ENCODE measurements at regions of chr6 and their contacts with region 1.

Region 1: DNA sequence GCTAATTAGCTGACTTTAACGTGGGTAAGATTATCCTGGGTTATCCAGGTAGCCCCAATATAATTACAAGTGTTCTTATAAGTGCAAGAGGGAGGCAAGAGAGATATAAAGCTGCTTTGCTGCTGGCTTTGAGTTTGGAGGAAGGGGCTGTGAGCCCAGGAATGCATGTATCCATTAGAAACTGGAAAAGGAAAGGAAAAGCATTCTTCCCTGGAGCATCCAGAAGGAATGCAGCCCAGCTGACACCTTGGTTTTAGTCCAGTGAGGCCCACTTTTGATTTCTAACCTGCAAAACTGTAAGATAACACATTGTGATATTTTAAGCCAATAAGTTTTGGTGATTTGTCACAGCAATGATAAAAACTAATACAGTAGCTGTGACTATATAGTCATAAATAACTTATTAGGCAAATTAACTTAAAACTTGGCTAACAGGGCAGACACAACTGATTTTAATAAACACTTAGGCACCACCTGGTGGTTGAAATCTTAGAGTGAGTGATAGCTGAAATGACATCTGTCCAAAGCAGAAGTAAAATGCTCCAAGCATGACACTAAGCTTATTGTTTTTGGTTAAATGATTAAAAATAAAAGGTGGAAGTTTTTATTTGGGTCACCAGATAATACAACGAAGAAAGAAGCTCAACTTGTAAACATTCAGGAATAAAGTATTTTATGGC is 35.6 kb downstream of the ADGRF4 start:
- DNase-seq: peak; percentile 67
- ATAC-seq: no peak
- H3K4me3 ChIP-seq: no peak overlapping the region
- H3K27ac ChIP-seq: no peak overlapping the region
- H3K4me1 ChIP-seq: peaks cover 61% of the 10 kb centered on the region
- H3K27me3 ChIP-seq: no peaks in the 10 kb centered on the region
- CTCF ChIP-seq: peak; percentile 79

Region 2: DNA sequence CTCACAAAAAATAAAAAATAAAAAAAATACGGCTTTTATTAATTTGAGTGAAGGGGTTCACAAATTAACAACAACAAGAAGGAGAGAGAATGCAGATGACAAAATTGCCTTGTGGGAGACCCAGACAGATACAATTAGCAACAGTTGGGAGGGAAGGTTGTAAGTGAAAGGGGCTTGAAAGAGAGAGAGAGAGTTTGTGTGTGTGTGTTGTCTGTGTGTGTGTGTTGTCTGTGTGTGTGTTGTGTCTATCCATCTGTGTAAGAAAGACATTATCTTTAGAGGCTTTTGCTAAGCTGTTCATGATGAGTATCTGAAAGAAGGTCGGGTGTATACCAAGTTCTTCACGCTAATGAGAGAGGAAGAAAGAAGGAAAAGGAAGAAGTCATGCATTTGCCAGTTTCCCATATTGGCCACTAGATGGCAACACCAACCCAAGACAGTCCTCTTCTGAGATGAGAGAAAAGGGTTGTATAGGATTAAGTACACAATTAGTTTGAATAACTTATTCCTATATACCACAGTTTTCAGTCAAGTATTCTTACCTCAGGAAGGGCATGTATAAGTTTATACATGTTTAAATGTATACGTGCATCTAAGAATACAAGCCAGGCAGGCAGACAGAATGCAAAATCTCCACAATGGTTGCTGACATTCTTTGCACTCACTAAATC is 320.1 kb before region 1 on chr6:
- CTCF ChIA-PET with region 1: interaction called, 3 read pairs
- POLR2A ChIA-PET with region 1: interaction called, 5 read pairs
- intact Hi-C with region 1: loop called (anchors 2 kb)
- DNase-seq: peak; percentile 77
- ATAC-seq: peak; percentile 90
- H3K4me3 ChIP-seq: peak overlapping the region; percentile 64
- H3K27ac ChIP-seq: peak overlapping the region; percentile 41
- H3K4me1 ChIP-seq: peaks cover 12% of the 10 kb centered on the region; the same call in 1 of the 2 replicates
- H3K27me3 ChIP-seq: no peaks in the 10 kb centered on the region
- CTCF ChIP-seq: peak; percentile 96

Region 3: DNA sequence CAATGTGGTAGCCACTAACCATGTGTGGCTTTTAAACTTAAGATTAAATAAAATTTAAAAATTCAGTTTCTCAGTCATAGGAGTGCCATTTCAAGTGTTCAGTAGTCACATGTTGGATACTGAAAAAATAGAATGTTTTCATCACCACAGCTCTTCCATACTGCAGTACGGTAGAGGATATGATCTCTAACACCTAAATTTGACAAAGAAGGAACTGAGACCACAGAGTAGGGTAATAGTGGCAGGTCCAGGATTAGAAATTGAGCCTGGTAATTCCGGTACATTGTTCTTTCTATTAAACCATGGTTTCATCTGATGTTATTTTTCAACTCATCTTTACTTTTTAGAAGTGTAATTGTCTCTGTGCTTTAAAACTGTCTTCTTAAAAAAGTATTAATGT is 152.4 kb before region 1 on chr6:
- CTCF ChIA-PET with region 1: no interaction called
- POLR2A ChIA-PET with region 1: no interaction called
- intact Hi-C with region 1: no loop called
- DNase-seq: no peak
- ATAC-seq: no peak
- H3K4me3 ChIP-seq: no peak overlapping the region
- H3K27ac ChIP-seq: no peak overlapping the region
- H3K4me1 ChIP-seq: no peaks in the 10 kb centered on the region
- H3K27me3 ChIP-seq: no peaks in the 10 kb centered on the region
- CTCF ChIP-seq: no peak

Region 4: DNA sequence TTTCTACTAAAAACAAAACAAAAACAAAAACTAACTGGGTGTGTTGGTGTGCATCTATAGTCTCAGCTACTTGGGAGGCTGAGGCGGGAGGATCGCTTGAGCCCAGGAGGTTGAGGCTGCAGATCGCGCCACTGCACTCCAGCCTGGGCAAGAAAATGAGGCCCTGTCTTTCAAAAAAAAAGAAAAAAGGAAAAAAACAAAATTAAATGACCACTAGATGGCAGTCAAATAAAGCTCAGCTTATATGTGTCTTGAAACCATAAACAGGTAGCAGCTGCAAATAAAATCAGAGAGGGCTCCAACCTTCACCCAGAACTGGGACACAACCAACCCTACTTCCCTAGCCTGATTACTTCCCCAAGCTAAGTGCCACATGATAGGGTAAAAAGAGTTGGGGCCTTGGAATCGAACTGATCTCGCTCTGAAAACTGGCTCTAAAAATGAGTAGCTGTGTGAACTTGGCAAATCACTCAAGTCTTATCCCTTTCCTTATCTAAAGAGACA is 102.7 kb before region 1 on chr6:
- CTCF ChIA-PET with region 1: interaction called, 11 read pairs
- POLR2A ChIA-PET with region 1: no interaction called
- intact Hi-C with region 1: loop called (anchors 1 kb)
- DNase-seq: peak; percentile 92
- ATAC-seq: peak; percentile 61
- H3K4me3 ChIP-seq: no peak overlapping the region
- H3K27ac ChIP-seq: no peak overlapping the region
- H3K4me1 ChIP-seq: peaks cover 4% of the 10 kb centered on the region
- H3K27me3 ChIP-seq: no peaks in the 10 kb centered on the region
- CTCF ChIP-seq: peak; percentile 74

Region 5: GRCh38 chr6:47690209-47690608 is 43.8 kb before region 1 on chr6:
- CTCF ChIA-PET with region 1: interaction called, 4 read pairs
- POLR2A ChIA-PET with region 1: interaction called, 5 read pairs
- intact Hi-C with region 1: loop called (anchors 1 kb)
- DNase-seq: peak; percentile 48
- ATAC-seq: peak; percentile 80
- H3K4me3 ChIP-seq: no peak overlapping the region
- H3K27ac ChIP-seq: no peak overlapping the region
- H3K4me1 ChIP-seq: no peaks in the 10 kb centered on the region
- H3K27me3 ChIP-seq: no peaks in the 10 kb centered on the region
- CTCF ChIP-seq: peak; percentile 50

Region 6: GRCh38 chr6:47780510-47781356 is 46.7 kb after region 1 on chr6:
- CTCF ChIA-PET with region 1: interaction called, 6 read pairs
- POLR2A ChIA-PET with region 1: no interaction called
- intact Hi-C with region 1: loop called (anchors 1 kb)
- DNase-seq: peak; percentile 89
- ATAC-seq: peak; percentile 97
- H3K4me3 ChIP-seq: peak overlapping the region; percentile 39; the same call in 1 of the 2 replicates
- H3K27ac ChIP-seq: no peak overlapping the region
- H3K4me1 ChIP-seq: peaks cover 10% of the 10 kb centered on the region
- H3K27me3 ChIP-seq: no peaks in the 10 kb centered on the region
- CTCF ChIP-seq: peak; percentile 92

Measured in PC-3 (cell line).